Right cardiac atrium (tissue), 5 donors: ENCODE measurements at regions of chr1 and their contacts with region 1.

Region 1: DNA sequence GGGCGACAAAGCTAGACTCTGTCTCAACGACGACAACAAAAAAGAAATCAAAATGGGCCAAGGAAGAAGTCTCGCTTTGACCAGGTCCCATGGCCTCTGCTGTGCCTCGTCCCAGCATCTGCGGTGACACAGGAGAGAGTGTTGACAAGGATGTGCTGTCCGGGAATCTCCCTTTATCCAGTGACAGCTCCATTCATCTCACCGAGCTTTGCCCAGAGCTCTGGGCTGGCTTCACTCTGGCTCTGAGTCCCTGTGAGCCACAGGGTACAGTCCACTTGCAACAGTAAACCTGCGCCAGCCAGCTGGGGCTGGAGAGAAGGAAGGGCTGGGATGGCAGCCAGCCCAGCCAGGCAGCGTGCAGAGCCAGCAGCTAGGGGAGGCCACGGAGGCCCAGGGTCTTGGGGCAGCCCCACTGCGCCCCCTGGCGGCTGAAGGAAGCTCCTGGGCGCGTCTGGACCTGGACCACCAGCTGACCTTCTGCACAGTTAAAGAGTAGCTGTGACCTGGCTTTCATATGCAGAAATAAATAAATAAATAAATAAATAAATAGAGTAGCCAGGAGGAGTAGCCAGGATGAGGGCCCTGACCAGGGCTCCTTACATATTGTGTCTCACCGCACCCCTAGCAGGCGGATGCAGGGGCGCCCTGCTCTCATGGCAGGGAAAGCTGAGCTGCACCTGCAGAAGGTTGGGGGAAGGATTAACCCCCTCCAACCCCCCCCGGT is 29.7 kb downstream of the ENO1 start:
- DNase-seq: peak; percentile 93 to 97 (median 97)
- ATAC-seq: peak; percentile 97
- H3K4me3 ChIP-seq: no peak overlapping the region
- H3K27ac ChIP-seq: peak overlapping the region; percentile 8
- H3K4me1 ChIP-seq: peaks cover 11% of the 10 kb centered on the region
- H3K27me3 ChIP-seq: no peaks in the 10 kb centered on the region

Region 2: GRCh38 chr1:8554956-8555534 is 293.8 kb before region 1 on chr1:
- intact Hi-C with region 1: loop called in 3 of 4 experiments (anchors 10 kb)
- DNase-seq: no peak
- ATAC-seq: no peak
- H3K4me3 ChIP-seq: no peak overlapping the region
- H3K27ac ChIP-seq: no peak overlapping the region
- H3K4me1 ChIP-seq: peaks cover 1% of the 10 kb centered on the region
- H3K27me3 ChIP-seq: no peaks in the 10 kb centered on the region

Region 3: GRCh38 chr1:8625491-8625890 is 223.3 kb before region 1 on chr1:
- intact Hi-C with region 1: no loop called
- DNase-seq: no peak
- ATAC-seq: no peak
- H3K4me3 ChIP-seq: no peak overlapping the region
- H3K27ac ChIP-seq: no peak overlapping the region
- H3K4me1 ChIP-seq: peaks cover 11% of the 10 kb centered on the region
- H3K27me3 ChIP-seq: no peaks in the 10 kb centered on the region

Region 4: DNA sequence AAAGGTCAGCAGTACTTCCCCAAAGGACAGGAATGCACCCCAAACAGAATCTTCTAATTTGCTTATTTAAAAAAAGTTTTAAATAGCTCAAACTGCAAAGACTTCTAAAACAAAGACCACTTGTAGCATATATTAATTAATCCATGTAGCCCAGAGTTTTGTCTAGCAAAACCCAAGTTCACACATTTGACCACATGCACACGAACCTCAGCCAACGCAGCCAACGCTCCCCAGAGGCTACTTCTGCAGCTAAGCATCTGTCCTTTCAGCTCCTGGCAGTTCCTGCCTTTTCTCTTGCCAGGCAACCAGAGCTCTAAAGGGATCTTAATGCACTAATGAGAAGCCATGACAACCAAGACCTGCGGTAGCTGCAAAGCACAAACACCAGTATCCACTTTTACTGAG is 121.0 kb before region 1 on chr1:
- intact Hi-C with region 1: loop called in 3 of 4 experiments (anchors 10 kb)
- DNase-seq: peak; percentile 50 to 86 (median 79)
- ATAC-seq: peak; percentile 50 to 76
- H3K4me3 ChIP-seq: no peak overlapping the region
- H3K27ac ChIP-seq: no peak overlapping the region
- H3K4me1 ChIP-seq: no peaks in the 10 kb centered on the region
- H3K27me3 ChIP-seq: no peaks in the 10 kb centered on the region

Region 5: DNA sequence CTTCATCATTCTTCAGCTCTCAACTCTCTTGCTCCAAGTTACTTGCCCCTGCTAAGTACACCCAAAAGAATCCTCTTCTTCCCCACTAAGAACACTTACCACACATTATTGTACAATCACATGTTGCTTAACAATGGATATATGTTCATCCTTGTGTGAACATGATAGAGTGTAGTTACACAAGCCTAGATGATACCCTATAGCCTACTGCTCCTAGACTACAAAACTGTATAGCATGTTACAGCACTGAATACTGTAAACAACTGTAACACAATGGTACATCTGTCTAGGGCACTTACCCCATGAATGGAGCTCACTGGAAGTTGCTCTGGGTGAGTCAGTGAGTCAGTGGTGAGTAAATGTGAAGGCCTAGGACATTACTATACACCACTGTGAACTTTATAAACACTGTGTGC is 108.8 kb before region 1 on chr1:
- intact Hi-C with region 1: loop called in 1 of 4 experiments (anchors 10 kb)
- DNase-seq: no peak
- ATAC-seq: no peak
- H3K4me3 ChIP-seq: no peak overlapping the region
- H3K27ac ChIP-seq: no peak overlapping the region
- H3K4me1 ChIP-seq: no peaks in the 10 kb centered on the region
- H3K27me3 ChIP-seq: no peaks in the 10 kb centered on the region